ENCODE measurements at regions of chr1 and their contacts with region 1.

Region 1: GRCh38 chr1:61851849-61852669 is 109.8 kb downstream of the PATJ start:
- DNase-seq: no peak
- H3K4me3 Mint-ChIP-seq: no peak overlapping the region
- H3K27ac Mint-ChIP-seq: no peak overlapping the region
- H3K4me1 Mint-ChIP-seq: no peaks in the 10 kb centered on the region
- H3K27me3 Mint-ChIP-seq: no peaks in the 10 kb centered on the region

Region 2: DNA sequence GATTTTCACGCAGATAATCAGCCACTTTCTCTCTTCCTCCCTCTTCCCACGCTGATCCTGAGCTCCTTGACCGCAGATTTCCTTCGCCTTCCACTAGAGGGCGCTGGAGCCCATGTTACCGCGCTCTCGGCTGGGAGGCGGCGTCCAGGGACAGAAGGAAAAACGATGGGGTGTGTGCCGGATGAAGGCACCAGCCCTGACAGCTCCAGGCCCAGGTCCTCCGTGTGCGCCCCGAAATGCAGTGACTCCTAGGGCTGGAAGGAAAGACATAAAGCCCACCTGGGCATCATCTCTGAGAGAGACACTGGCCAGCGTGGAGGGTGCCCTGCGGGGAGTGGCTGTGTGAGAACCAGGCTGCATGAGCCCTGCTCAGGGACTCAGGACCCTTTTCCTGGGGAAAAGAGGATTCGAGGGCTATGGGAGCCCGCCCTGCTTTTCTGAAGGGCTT is 1880.6 kb before region 1 on chr1:
- intact Hi-C with region 1: loop called (anchors 5 kb)
- DNase-seq: peak; percentile 19
- H3K4me3 Mint-ChIP-seq: no peak overlapping the region
- H3K27ac Mint-ChIP-seq: no peak overlapping the region
- H3K4me1 Mint-ChIP-seq: no peaks in the 10 kb centered on the region
- H3K27me3 Mint-ChIP-seq: peaks cover 27% of the 10 kb centered on the region

Region 3: DNA sequence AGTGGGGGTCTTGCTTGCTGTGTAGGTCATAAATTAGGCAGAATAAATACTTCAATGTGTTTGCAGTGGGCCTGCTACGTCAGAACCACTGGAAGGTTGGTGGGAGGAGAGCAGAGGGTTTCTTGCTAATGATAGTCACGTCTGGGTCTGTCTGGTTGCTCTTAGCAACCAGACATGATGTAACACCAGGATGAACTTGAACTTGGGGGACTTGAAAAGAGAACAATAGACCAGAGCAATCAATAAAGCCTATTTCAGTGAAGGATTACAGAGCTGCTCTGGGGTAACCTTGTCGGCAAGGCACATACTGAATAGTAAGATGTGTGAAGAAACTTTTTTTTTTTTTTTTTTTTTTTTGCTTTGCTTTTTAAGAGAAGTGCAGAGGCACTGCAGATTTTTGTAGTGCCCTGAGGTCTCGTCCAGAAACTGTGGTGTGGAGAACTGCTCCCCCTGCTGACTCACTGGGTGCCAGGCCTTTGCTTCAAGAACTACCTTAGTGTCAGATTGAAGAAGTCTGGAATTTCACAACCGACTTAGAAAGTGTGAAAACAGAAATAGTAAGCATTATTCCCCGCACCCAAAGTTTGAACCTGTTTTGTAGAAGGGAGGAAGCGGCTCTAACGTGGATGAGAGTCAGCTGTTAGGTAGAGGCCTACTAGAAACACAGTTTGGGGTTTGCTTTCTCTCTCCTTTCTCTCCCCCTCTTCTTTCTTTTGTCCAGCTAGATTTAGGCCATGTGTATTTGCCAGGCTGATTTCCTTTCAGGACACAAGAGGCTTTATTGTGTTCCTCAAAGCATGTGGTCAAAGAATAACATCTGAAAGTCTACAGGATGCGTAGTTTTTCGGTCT is 398.7 kb before region 1 on chr1:
- intact Hi-C with region 1: loop called (anchors 5 kb)
- DNase-seq: peak; percentile 35
- H3K4me3 Mint-ChIP-seq: no peak overlapping the region
- H3K27ac Mint-ChIP-seq: no peak overlapping the region
- H3K4me1 Mint-ChIP-seq: no peaks in the 10 kb centered on the region
- H3K27me3 Mint-ChIP-seq: peaks cover 6% of the 10 kb centered on the region

Region 4: GRCh38 chr1:61469365-61469764 is 382.7 kb before region 1 on chr1:
- intact Hi-C with region 1: no loop called
- DNase-seq: no peak
- H3K4me3 Mint-ChIP-seq: no peak overlapping the region
- H3K27ac Mint-ChIP-seq: no peak overlapping the region
- H3K4me1 Mint-ChIP-seq: no peaks in the 10 kb centered on the region
- H3K27me3 Mint-ChIP-seq: peaks cover 3% of the 10 kb centered on the region

Region 5: GRCh38 chr1:61588736-61589672 is 263.1 kb before region 1 on chr1:
- intact Hi-C with region 1: loop called (anchors 1 kb)
- DNase-seq: peak; percentile 36
- H3K4me3 Mint-ChIP-seq: no peak overlapping the region
- H3K27ac Mint-ChIP-seq: no peak overlapping the region
- H3K4me1 Mint-ChIP-seq: no peaks in the 10 kb centered on the region
- H3K27me3 Mint-ChIP-seq: peaks cover 3% of the 10 kb centered on the region

Region 6: GRCh38 chr1:61724813-61725694 is 127.0 kb before region 1 on chr1 and contains the start of gene TM2D1:
- intact Hi-C with region 1: loop called (anchors 5 kb)
- DNase-seq: peak; percentile 84
- H3K4me3 Mint-ChIP-seq: peak within 1 kb of the TSS; percentile 89
- H3K27ac Mint-ChIP-seq: peak within 1 kb of the TSS; percentile 92
- H3K4me1 Mint-ChIP-seq: peaks cover 14% of the 10 kb centered on the region
- H3K27me3 Mint-ChIP-seq: no peaks in the 10 kb centered on the region
- total RNA-seq, gene TM2D1: 32.3 and 32.6 TPM in 2 replicates

Region 7: GRCh38 chr1:61790837-61791236 is 61.2 kb before region 1 on chr1:
- intact Hi-C with region 1: no loop called
- DNase-seq: no peak
- H3K4me3 Mint-ChIP-seq: no peak overlapping the region
- H3K27ac Mint-ChIP-seq: no peak overlapping the region
- H3K4me1 Mint-ChIP-seq: no peaks in the 10 kb centered on the region
- H3K27me3 Mint-ChIP-seq: no peaks in the 10 kb centered on the region

Region 8: GRCh38 chr1:61839679-61840078 is 12.4 kb before region 1 on chr1:
- intact Hi-C with region 1: no loop called
- DNase-seq: no peak
- H3K4me3 Mint-ChIP-seq: no peak overlapping the region
- H3K27ac Mint-ChIP-seq: no peak overlapping the region
- H3K4me1 Mint-ChIP-seq: peaks cover 2% of the 10 kb centered on the region
- H3K27me3 Mint-ChIP-seq: no peaks in the 10 kb centered on the region

Measured in activated T-helper 2 cell treated with anti-CD3 and anti-CD28 coated beads, Interferon-gamma antibody, Interleukin-2, Interleukin-4, amounts not matched to agents 10 μg/mL and 5 μg/mL and 100 μg/mL, durations not matched to agents 14 hours and 24 hours and 36 hours (primary cell).